Mammary epithelial cell (primary cell): ENCODE measurements at regions of chr7 and their contacts with region 1.

Region 1: GRCh38 chr7:134632937-134633540 is 13.6 kb upstream of the BPGM start:
- DNase-seq: peak; percentile 57
- H3K4me3 ChIP-seq: no peak overlapping the region
- H3K27ac ChIP-seq: no peak overlapping the region
- H3K4me1 ChIP-seq: peaks cover 7% of the 10 kb centered on the region
- H3K27me3 ChIP-seq: no peaks in the 10 kb centered on the region
- CTCF ChIP-seq: peak; percentile 65 to 66

Region 2: DNA sequence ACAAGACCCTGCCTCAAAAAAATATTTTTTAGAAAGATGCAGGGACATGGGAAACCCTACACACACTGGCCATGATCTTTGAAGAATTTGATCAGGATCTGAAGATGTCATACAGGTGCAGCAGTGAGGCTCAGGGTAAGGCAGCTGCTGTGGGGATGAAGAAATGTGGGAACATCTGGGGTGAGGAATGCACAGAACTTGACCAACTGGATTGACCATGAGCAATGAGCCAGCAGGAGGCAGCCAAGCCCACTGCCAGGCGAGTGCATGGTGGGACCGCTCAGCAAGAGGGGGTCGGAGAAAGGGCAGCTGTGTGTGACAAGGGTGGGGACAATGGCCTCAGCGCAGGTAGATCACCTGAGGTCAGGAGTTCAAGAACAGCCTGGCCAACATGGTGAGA is 229.4 kb before region 1 on chr7:
- CTCF ChIA-PET with region 1: no interaction called
- dilution Hi-C with region 1: no loop called
- in situ Hi-C with region 1: no loop called
- intact Hi-C with region 1: no loop called
- DNase-seq: no peak
- H3K4me3 ChIP-seq: no peak overlapping the region
- H3K27ac ChIP-seq: no peak overlapping the region
- H3K4me1 ChIP-seq: no peaks in the 10 kb centered on the region
- H3K27me3 ChIP-seq: no peaks in the 10 kb centered on the region
- CTCF ChIP-seq: no peak

Region 3: DNA sequence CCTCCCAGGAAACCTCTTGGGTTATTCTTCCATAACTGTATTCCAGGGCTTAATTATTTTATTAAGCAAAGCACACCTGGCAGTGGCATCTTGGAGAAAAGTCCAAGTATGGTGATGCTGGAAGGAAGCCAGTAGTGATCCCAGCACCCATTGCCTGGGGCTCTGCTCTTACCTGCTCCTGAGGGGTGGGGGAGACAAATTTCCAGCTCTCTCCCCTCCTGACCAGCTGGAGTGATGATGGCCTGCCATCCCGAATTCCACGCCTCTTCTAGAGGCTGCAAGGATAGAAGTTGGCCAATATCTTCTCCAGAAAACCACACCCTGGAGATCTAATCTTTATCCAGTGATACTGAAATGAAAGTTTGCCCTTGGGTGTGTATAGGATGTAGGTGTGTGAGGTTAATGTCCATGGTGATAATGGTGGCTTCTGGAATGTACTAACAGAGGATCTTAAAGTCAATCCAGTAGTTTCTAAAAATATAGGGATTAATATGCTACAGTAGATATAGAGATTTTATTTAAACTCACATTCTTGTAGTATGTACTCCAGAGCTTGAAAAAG is 62.0 kb before region 1 on chr7:
- CTCF ChIA-PET with region 1: no interaction called
- dilution Hi-C with region 1: no loop called
- in situ Hi-C with region 1: no loop called
- intact Hi-C with region 1: no loop called
- DNase-seq: no peak
- H3K4me3 ChIP-seq: no peak overlapping the region
- H3K27ac ChIP-seq: no peak overlapping the region
- H3K4me1 ChIP-seq: peaks cover 4% of the 10 kb centered on the region
- H3K27me3 ChIP-seq: no peaks in the 10 kb centered on the region
- CTCF ChIP-seq: no peak

Region 4: GRCh38 chr7:134646425-134647305 is 13.6 kb after region 1 on chr7 and contains the start of gene BPGM:
- CTCF ChIA-PET with region 1: interaction called, 12 read pairs
- dilution Hi-C with region 1: no loop called
- in situ Hi-C with region 1: no loop called
- intact Hi-C with region 1: no loop called
- DNase-seq: peak; percentile 100
- H3K4me3 ChIP-seq: peak within 1 kb of the TSS; percentile 87 to 92 (median 92)
- H3K27ac ChIP-seq: peak within 1 kb of the TSS; percentile 83
- H3K4me1 ChIP-seq: peaks cover 14% of the 10 kb centered on the region
- H3K27me3 ChIP-seq: no peaks in the 10 kb centered on the region
- CTCF ChIP-seq: peak; percentile 9 to 26
- total RNA-seq, gene BPGM: 21.3 to 55.2 TPM

Region 5: DNA sequence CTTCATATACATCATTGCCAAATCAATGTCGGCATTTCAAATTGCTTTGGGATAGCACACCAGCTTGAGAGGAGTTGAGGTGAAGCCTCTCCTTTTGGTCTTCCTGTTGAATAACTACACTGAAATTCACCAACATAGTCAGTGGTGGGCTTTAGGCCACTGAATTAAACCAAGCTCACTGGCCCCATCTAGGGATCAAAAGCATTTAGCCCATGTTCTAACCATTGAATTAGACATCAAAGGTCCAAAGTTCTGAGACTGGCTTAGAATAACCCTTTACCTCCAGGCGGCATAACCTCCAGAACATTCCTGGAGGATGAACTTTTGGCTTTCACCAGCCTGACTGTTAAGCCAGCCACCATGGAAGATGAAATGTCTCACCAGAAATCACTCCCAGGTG is 68.2 kb after region 1 on chr7:
- CTCF ChIA-PET with region 1: no interaction called
- dilution Hi-C with region 1: no loop called
- in situ Hi-C with region 1: no loop called
- intact Hi-C with region 1: loop called (anchors 1 kb)
- DNase-seq: no peak
- H3K4me3 ChIP-seq: no peak overlapping the region
- H3K27ac ChIP-seq: no peak overlapping the region
- H3K4me1 ChIP-seq: peaks cover 6% of the 10 kb centered on the region
- H3K27me3 ChIP-seq: no peaks in the 10 kb centered on the region
- CTCF ChIP-seq: peak; percentile 41 to 42

Region 6: GRCh38 chr7:134755401-134756022 is 122.5 kb after region 1 on chr7:
- CTCF ChIA-PET with region 1: no interaction called
- dilution Hi-C with region 1: no loop called
- in situ Hi-C with region 1: no loop called
- intact Hi-C with region 1: loop called (anchors 1 kb)
- DNase-seq: no peak
- H3K4me3 ChIP-seq: no peak overlapping the region
- H3K27ac ChIP-seq: no peak overlapping the region
- H3K4me1 ChIP-seq: peaks cover 17% of the 10 kb centered on the region
- H3K27me3 ChIP-seq: no peaks in the 10 kb centered on the region
- CTCF ChIP-seq: peak; percentile 69 to 71

Region 7: DNA sequence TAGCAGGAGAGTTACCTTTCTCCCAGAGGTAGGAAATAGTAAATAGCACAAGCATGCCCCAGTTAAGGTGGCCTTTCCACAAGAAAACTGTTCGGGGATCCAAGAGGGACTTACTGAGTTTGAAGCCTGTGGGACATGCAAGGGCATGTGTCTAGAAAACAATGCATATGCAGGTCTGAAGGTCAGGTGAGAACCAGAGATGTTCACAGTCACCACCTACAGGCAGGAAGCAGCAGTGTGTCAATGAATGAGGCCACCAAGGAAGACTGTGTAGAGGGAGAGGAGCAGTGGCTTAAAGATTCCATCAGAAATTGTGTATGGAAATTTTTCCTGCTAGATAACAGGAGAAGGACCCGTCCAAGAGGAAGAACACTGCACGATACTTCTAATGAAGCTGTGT is 212.4 kb after region 1 on chr7:
- CTCF ChIA-PET with region 1: no interaction called
- dilution Hi-C with region 1: no loop called
- in situ Hi-C with region 1: no loop called
- intact Hi-C with region 1: loop called (anchors 1 kb)
- DNase-seq: peak; percentile 73
- H3K4me3 ChIP-seq: no peak overlapping the region
- H3K27ac ChIP-seq: peak overlapping the region; percentile 59
- H3K4me1 ChIP-seq: peaks cover 26% of the 10 kb centered on the region
- H3K27me3 ChIP-seq: no peaks in the 10 kb centered on the region
- CTCF ChIP-seq: peak; percentile 81 to 84

Region 8: DNA sequence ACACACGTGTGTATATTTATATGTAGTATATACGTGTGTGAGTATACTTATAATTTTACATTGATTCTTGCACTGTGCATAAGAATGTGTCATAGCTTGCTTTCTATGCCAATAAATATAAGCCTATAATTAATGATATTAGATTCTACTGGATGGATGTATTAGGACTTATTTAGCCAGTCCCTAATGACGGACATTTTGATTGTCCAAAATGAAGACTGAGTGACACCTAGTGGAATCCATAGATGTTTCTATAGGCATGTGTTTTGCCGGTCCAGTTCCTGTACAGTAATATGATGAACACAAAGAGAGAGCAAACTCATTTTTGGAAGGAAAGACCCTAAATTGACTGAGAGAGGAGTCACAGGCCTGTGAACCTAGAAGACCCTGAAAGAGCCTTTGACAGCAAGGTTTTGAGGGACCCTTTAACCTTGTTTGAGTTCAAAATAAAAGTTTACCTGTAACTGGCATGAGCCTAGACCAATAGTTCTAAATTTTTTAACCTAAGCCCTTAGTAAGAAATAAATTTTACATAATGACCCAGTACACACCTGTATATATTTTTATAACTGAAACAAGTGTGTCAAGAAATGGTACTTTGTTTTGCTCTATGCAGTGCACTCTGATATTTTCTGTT is 310.8 kb after region 1 on chr7:
- CTCF ChIA-PET with region 1: no interaction called
- dilution Hi-C with region 1: no loop called
- in situ Hi-C with region 1: no loop called
- intact Hi-C with region 1: loop called (anchors 2 kb)
- DNase-seq: no peak
- H3K4me3 ChIP-seq: no peak overlapping the region
- H3K27ac ChIP-seq: no peak overlapping the region
- H3K4me1 ChIP-seq: peaks cover 7% of the 10 kb centered on the region
- H3K27me3 ChIP-seq: no peaks in the 10 kb centered on the region
- CTCF ChIP-seq: no peak

Region 9: GRCh38 chr7:135164357-135165061 is 531.5 kb after region 1 on chr7:
- CTCF ChIA-PET with region 1: interaction called, 18 read pairs
- dilution Hi-C with region 1: no loop called
- in situ Hi-C with region 1: no loop called
- intact Hi-C with region 1: no loop called
- DNase-seq: no peak
- H3K4me3 ChIP-seq: no peak overlapping the region
- H3K27ac ChIP-seq: no peak overlapping the region
- H3K4me1 ChIP-seq: peaks cover 14% of the 10 kb centered on the region
- H3K27me3 ChIP-seq: no peaks in the 10 kb centered on the region
- CTCF ChIP-seq: no peak